ENCODE measurements at regions of chr1 and their contacts with region 1.

Region 1: DNA sequence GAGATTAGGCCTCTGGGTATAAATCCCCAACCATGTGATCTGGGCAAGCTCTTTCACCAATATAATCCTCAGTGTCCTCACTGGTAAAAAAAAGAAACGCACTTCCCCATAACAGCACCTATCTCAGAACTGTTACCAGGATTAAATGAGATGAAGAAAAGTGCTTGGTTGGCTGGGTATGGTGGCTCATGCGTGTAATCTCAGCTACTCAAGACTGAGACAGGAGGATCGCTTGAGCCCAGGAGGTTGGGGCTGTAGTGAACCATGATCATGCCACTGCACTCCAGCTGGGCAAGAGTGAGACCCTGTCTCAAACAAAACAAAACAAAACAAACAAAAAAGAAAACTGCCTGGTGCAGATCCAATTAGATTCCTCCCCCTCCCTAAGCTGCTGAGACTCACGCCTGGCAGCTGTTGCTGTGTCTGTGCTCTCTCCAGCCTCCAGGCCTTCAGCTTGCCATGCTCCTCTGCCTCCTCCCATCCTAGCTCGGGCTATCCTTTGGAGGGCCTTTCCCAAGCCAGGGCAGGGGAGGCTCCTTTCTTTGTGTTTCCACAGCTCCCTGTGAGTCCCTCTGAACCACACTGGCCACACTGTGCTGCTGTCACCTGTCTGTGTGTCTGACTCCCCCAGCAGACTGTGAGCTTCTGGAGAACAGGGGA is 19.0 kb downstream of the CYB5RL start:
- DNase-seq: no peak
- H3K4me3 ChIP-seq: no peak overlapping the region
- H3K27ac ChIP-seq: no peak overlapping the region
- H3K4me1 ChIP-seq: no peaks in the 10 kb centered on the region
- H3K27me3 ChIP-seq: no peaks in the 10 kb centered on the region
- CTCF ChIP-seq: no peak
- EP300 ChIP-seq: no peak
- POLR2A ChIP-seq: no peak
- RAD21 ChIP-seq: no peak

Region 2: DNA sequence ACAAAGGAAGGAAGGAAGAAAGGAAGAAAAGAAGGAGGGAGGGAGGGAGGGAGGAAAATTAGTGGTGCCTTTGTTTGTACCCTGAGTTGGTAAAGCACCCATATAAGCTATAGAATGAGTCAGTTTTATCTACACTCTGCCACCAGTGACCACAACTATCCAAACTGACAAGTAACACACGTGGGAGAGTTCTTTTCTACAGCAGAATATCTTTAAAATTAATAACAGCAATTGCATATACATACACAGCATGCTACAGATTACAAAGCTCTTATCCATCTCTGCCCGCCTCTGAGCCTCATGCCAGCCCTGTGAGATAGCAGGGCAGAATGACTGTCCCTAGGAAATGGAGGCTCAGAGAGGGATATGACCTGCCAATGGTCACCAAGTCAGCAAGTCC is 48.3 kb before region 1 on chr1:
- CTCF ChIA-PET with region 1: interaction called, 12 read pairs
- POLR2A ChIA-PET with region 1: no interaction called
- DNase-seq: no peak
- H3K4me3 ChIP-seq: no peak overlapping the region
- H3K27ac ChIP-seq: no peak overlapping the region
- H3K4me1 ChIP-seq: peaks cover 12 to 24% (median 16%) of the 10 kb centered on the region in 4 experiments
- H3K27me3 ChIP-seq: no peaks in the 10 kb centered on the region
- CTCF ChIP-seq: no peak
- EP300 ChIP-seq: no peak
- POLR2A ChIP-seq: no peak
- RAD21 ChIP-seq: no peak

Region 3: GRCh38 chr1:54167422-54168139 is 13.2 kb before region 1 on chr1:
- CTCF ChIA-PET with region 1: interaction called, 20 read pairs
- POLR2A ChIA-PET with region 1: interaction called, 4 read pairs
- DNase-seq: no peak
- H3K4me3 ChIP-seq: no peak overlapping the region
- H3K27ac ChIP-seq: no peak overlapping the region
- H3K4me1 ChIP-seq: peaks cover 0 to 7% (median 0%) of the 10 kb centered on the region in 4 experiments; a peak in 1 of 7 replicates
- H3K27me3 ChIP-seq: no peaks in the 10 kb centered on the region
- CTCF ChIP-seq: no peak
- EP300 ChIP-seq: no peak
- POLR2A ChIP-seq: no peak
- RAD21 ChIP-seq: no peak

Region 4: GRCh38 chr1:54199765-54200518 is 19.1 kb after region 1 on chr1 and contains the starts of genes CYB5RL and MRPL37:
- CTCF ChIA-PET with region 1: interaction called, 16 read pairs
- POLR2A ChIA-PET with region 1: interaction called, 7 read pairs
- DNase-seq: peak; percentile 73 to 91
- H3K4me3 ChIP-seq: peak within 1 kb of the TSS; percentile 91 to 99 (median 96)
- H3K27ac ChIP-seq: peak within 1 kb of the TSS; percentile 84
- H3K4me1 ChIP-seq: peaks cover 0 to 13% (median 6%) of the 10 kb centered on the region in 4 experiments; a peak in 6 of 7 replicates
- H3K27me3 ChIP-seq: no peaks in the 10 kb centered on the region
- CTCF ChIP-seq: no peak
- EP300 ChIP-seq: no peak
- POLR2A ChIP-seq: peak; percentile 78 to 98
- RAD21 ChIP-seq: no peak
- total RNA-seq, gene CYB5RL: 14.1 and 15.1 TPM in 2 replicates
- total RNA-seq, gene MRPL37: 126 and 129 TPM in 2 replicates

Region 5: DNA sequence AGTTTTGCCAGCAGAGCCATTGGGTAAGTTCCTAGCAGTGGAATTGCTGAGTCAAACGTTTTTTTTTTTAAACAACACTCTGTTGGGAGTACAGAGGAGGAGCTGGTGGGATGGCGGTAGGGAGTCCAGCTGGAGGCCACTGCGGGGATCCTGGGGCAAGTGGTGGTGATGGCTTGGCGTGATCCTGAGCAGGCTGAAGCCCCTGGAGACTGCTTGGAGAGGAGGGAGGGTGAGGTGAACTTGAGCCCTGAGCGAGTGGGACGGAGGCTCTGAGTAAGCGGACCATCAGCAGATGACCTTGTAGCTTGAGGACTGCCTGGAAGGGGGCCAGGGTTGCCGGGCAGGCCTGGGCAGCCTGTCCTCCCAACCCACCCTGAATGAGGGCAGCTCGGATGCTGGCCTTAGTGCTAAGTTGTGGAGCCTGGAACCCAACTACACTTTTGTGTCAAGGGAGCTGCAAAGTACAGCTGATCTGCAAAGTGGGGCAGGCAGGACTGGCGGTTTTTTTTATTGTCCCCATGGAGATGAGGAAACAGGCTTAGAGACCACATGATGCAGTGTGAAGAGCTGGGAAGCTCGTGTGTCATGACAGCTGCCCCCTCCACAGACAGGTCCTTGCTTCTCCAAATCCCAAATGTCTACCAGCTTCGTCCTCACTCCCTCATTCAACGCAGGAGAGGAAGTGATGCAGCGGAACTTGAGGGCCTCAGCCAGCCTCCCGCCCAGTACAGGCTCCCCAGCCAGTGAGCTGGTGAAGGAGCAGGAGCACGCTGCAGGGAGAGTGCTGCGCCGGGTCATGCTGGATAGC is 39.4 kb after region 1 on chr1:
- CTCF ChIA-PET with region 1: interaction called, 19 read pairs
- POLR2A ChIA-PET with region 1: interaction called, 4 read pairs
- DNase-seq: no peak
- H3K4me3 ChIP-seq: no peak overlapping the region
- H3K27ac ChIP-seq: no peak overlapping the region
- H3K4me1 ChIP-seq: peaks cover 0 to 4% (median 2%) of the 10 kb centered on the region in 4 experiments; a peak in 3 of 7 replicates
- H3K27me3 ChIP-seq: no peaks in the 10 kb centered on the region
- CTCF ChIP-seq: no peak
- EP300 ChIP-seq: no peak
- POLR2A ChIP-seq: no peak
- RAD21 ChIP-seq: no peak